ENCODE measurements at regions of chr16 and their contacts with region 1.

Region 1: DNA sequence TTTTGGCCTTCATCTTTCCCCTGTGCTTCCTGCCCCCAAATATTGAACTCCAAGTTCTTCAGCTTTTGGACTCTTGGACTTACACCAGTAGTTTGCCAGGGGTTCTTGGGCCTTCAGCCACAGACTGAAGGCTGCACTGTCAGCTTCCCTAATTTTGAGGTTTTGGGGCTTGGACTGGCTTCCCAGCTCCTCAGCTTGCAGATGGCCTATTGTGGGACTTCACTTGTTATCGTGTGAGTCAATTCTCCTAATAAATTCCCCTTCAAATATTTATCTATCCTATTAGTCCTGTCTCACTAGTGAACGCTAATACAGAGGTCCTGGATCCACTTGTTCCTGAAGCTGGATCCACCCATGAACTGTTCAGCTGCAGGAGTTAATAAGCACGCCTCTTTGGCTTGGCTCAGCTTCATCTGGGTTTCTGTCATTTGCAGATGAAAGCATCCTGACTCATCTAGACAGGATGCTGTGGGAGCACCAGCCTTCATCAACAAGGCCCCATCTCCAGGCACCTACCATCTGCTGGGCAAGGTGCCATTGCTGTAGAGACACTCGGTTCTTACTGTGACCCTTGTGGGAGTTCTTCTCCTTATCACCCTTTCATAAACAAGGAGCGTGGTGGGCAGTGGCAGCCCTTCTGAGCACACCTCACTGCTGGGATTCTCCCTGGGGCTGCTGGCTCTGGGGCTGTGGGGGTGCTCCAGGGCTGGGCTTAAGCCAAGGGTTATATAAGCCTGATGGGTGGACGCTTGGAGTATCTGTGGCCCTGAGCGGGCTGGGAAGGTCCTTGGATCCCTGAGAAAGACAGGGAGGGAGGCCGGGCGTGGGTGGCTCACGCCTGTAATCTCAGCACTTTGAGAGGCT is 23.1 kb downstream of the LAT start:
- DNase-seq: peak in 8 of 9 donors; percentile 54 to 77 (median 68)
- ATAC-seq: peak; percentile 80
- H3K4me3 ChIP-seq: no peak overlapping the region
- H3K4me3 Mint-ChIP-seq: peak overlapping the region; percentile 64 to 88 (median 83)
- H3K27ac ChIP-seq: peak overlapping the region; percentile 74
- H3K27ac Mint-ChIP-seq: peak overlapping the region; percentile 92 to 99 (median 96)
- H3K4me1 ChIP-seq: peaks cover 38 to 52% of the 10 kb centered on the region in 2 donors
- H3K4me1 Mint-ChIP-seq: peaks cover 33 to 73% (median 52%) of the 10 kb centered on the region in 7 donors
- H3K27me3 ChIP-seq: no peaks in the 10 kb centered on the region
- H3K27me3 Mint-ChIP-seq: no peaks in the 10 kb centered on the region

Region 2: GRCh38 chr16:28990375-28991040 is 17.5 kb before region 1 on chr16:
- CTCF ChIA-PET with region 1: interaction called, 8 read pairs
- POLR2A ChIA-PET with region 1: interaction called, 194 read pairs
- intact Hi-C with region 1: loop called (anchors 1 to 2 kb)
- DNase-seq: peak in 2 of 9 donors; percentile 53 to 65
- ATAC-seq: peak; percentile 32
- H3K4me3 ChIP-seq: peak overlapping the region; percentile 27
- H3K4me3 Mint-ChIP-seq: peak overlapping the region; percentile 78 to 100 (median 97)
- H3K27ac ChIP-seq: peak overlapping the region; percentile 87
- H3K27ac Mint-ChIP-seq: peak overlapping the region; percentile 89 to 99 (median 96)
- H3K4me1 ChIP-seq: peaks cover 33 to 46% of the 10 kb centered on the region in 2 donors
- H3K4me1 Mint-ChIP-seq: peaks cover 34 to 76% (median 47%) of the 10 kb centered on the region in 7 donors
- H3K27me3 ChIP-seq: no peaks in the 10 kb centered on the region
- H3K27me3 Mint-ChIP-seq: no peaks in the 10 kb centered on the region

Region 3: GRCh38 chr16:29029168-29029994 is 21.4 kb after region 1 on chr16:
- CTCF ChIA-PET with region 1: interaction called, 3 read pairs
- POLR2A ChIA-PET with region 1: interaction called, 19 read pairs
- intact Hi-C with region 1: no loop called
- DNase-seq: peak in 2 of 9 donors; percentile 58 to 85
- ATAC-seq: peak; percentile 66
- H3K4me3 ChIP-seq: peak overlapping the region; percentile 34
- H3K4me3 Mint-ChIP-seq: peak overlapping the region in 6 of 10 donors; percentile 17 to 46 (median 38)
- H3K27ac ChIP-seq: no peak overlapping the region
- H3K27ac Mint-ChIP-seq: peak overlapping the region in 8 of 9 donors; percentile 38 to 90 (median 63)
- H3K4me1 ChIP-seq: peaks cover 14 to 30% of the 10 kb centered on the region in 2 donors
- H3K4me1 Mint-ChIP-seq: peaks cover 12 to 46% (median 39%) of the 10 kb centered on the region in 7 donors
- H3K27me3 ChIP-seq: no peaks in the 10 kb centered on the region
- H3K27me3 Mint-ChIP-seq: no peaks in the 10 kb centered on the region

Region 4: GRCh38 chr16:29126057-29126494 is 118.1 kb after region 1 on chr16:
- CTCF ChIA-PET with region 1: no interaction called
- POLR2A ChIA-PET with region 1: no interaction called
- intact Hi-C with region 1: no loop called
- DNase-seq: peak in 3 of 9 donors; percentile 39 to 50 (median 49)
- ATAC-seq: peak; percentile 90
- H3K4me3 ChIP-seq: no peak overlapping the region
- H3K4me3 Mint-ChIP-seq: peak overlapping the region in 8 of 10 donors; percentile 7 to 84 (median 64)
- H3K27ac ChIP-seq: no peak overlapping the region
- H3K27ac Mint-ChIP-seq: peak overlapping the region in 7 of 9 donors; percentile 13 to 97 (median 80)
- H3K4me1 ChIP-seq: no peaks in the 10 kb centered on the region
- H3K4me1 Mint-ChIP-seq: peaks cover 0 to 23% (median 12%) of the 10 kb centered on the region in 7 donors
- H3K27me3 ChIP-seq: no peaks in the 10 kb centered on the region
- H3K27me3 Mint-ChIP-seq: no peaks in the 10 kb centered on the region

Measured in naive thymus-derived CD4-positive, alpha-beta T cell (primary cell).